ENCODE measurements at regions of chr4 and their contacts with region 1.

Region 1: DNA sequence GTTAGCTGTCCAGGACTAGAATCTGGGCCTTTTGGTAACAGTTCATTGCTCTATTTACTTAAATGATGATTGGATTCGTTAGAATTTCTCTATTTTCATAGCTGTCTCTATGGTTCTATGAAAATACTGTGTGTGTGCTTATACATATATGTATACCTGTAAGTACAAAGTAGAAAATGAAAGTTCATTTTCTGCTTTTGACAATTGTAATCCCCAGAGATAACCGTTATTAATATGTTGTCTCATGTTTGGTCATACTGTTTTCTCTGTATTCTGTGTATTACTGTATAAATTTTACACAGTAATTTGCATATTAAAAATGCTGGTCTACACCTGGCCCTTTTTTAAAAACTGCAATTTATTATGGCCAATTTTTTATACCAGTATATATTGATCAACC is 55.4 kb downstream of the CLCN3 start:
- DNase-seq: no peak
- H3K4me3 ChIP-seq: no peak overlapping the region
- H3K27ac ChIP-seq: no peak overlapping the region
- H3K4me1 ChIP-seq: no peaks in the 10 kb centered on the region
- H3K27me3 ChIP-seq: no peaks in the 10 kb centered on the region
- CTCF ChIP-seq: no peak
- POLR2A ChIP-seq: no peak

Region 2: GRCh38 chr4:169612871-169613859 is 62.7 kb before region 1 on chr4:
- intact Hi-C with region 1: loop called (anchors 5 kb)
- DNase-seq: peak; percentile 61 to 65
- H3K4me3 ChIP-seq: peak overlapping the region; percentile 56 to 79 (median 64)
- H3K27ac ChIP-seq: peak overlapping the region; percentile 96 to 97
- H3K4me1 ChIP-seq: peaks cover 3 to 4% of the 10 kb centered on the region in 2 donors
- H3K27me3 ChIP-seq: no peaks in the 10 kb centered on the region
- CTCF ChIP-seq: peak; percentile 12 to 59 (median 34)
- POLR2A ChIP-seq: no peak

Region 3: DNA sequence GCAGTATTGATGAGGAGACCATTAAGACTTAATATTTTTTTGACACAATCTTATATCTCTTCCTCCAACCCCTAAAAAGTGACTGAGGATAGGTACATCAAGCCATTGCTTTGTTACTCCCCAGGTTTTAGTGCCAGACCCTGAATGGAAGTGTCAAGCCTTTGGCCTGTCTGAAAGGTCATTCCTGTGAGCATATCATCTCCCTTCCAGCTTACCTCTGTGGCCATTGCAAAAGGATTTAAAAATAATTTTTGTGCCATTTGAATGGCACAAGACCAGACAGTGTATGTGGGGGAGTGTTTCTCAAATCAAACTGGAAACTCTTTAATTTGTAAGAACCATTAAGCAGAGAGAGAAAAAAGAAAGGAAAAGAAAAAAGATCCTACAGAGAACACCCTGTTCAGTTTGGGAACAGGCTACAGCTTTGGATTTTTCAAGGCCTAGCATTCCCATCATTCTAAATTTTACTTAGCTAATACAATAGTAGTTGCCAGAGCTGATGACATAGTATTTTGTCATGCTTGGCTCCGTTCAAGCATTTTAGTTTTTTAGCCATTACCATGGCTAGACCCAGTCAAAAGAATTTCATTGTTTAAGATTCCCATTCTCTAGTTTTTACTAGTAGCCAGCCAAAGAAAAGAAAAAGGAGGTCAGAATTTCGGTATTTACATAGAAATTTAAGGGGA is 32.3 kb after region 1 on chr4:
- intact Hi-C with region 1: no loop called
- DNase-seq: no peak
- H3K4me3 ChIP-seq: no peak overlapping the region
- H3K27ac ChIP-seq: no peak overlapping the region
- H3K4me1 ChIP-seq: no peaks in the 10 kb centered on the region
- H3K27me3 ChIP-seq: no peaks in the 10 kb centered on the region
- CTCF ChIP-seq: no peak
- POLR2A ChIP-seq: no peak

Region 4: GRCh38 chr4:170139764-170140163 is 463.9 kb after region 1 on chr4:
- intact Hi-C with region 1: no loop called
- DNase-seq: no peak
- H3K4me3 ChIP-seq: no peak overlapping the region
- H3K27ac ChIP-seq: no peak overlapping the region
- H3K4me1 ChIP-seq: no peaks in the 10 kb centered on the region
- H3K27me3 ChIP-seq: no peaks in the 10 kb centered on the region
- CTCF ChIP-seq: no peak
- POLR2A ChIP-seq: no peak